CD4-positive, alpha-beta T cell (primary cell): ENCODE measurements at regions of chr17 and their contacts with region 1.

Region 1: DNA sequence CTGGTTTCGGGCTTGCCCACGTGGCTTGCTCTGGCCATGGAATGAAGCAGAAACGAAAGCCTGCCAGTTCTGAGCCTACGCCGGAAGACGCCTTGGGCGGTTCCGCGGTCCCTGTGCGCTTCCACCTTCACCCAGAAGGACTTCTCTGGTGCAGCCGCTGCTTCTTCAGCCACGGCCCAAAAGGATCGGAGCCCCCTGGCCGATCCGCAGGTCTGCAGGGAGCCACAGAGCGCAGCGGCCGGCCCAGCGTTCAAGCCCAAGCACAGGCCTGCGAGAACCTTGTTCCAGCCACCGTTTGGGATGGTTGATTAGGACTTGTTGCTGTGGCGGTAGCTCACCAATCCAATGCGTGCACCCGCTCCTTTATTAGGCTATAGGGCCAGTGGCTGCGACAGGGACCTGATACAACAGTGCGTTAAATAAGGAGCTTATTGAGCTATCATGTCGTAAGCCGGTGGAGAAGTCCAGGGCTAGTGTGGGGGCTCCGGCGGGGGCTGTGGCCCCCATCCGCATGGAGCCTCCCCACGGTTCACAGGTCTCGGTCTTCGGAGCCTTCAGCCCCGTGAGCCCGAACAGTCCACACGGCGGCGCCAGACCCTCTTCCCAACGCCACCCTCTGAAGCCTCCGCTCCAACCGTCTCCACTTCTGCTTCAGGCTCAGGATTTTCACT is 10.1 kb upstream of the MPP2 start:
- DNase-seq: peak in 12 of 14 experiments; percentile 23 to 77 (median 45)
- ATAC-seq: peak; percentile 80
- H3K4me3 ChIP-seq: peak overlapping the region; percentile 63
- H3K4me3 Mint-ChIP-seq: peak overlapping the region; percentile 86
- H3K27ac ChIP-seq: no peak overlapping the region
- H3K27ac Mint-ChIP-seq: peak overlapping the region; percentile 26
- H3K4me1 ChIP-seq: peaks cover 20% of the 10 kb centered on the region
- H3K4me1 Mint-ChIP-seq: peaks cover 18% of the 10 kb centered on the region
- H3K27me3 ChIP-seq: no peaks in the 10 kb centered on the region
- H3K27me3 Mint-ChIP-seq: no peaks in the 10 kb centered on the region
- CTCF ChIP-seq: peak; percentile 55

Region 2: GRCh38 chr17:43832976-43833829 is 84.3 kb before region 1 on chr17 and contains the start of gene MPP3:
- CTCF ChIA-PET with region 1: no interaction called
- POLR2A ChIA-PET with region 1: no interaction called
- intact Hi-C with region 1: no loop called
- DNase-seq: peak; percentile 5 to 81 (median 51)
- ATAC-seq: peak; percentile 95
- H3K4me3 ChIP-seq: peak within 1 kb of the TSS; percentile 59
- H3K4me3 Mint-ChIP-seq: peak within 1 kb of the TSS; percentile 91
- H3K27ac ChIP-seq: no peak within 1 kb of the TSS
- H3K27ac Mint-ChIP-seq: no peak within 1 kb of the TSS
- H3K4me1 ChIP-seq: peaks cover 17% of the 10 kb centered on the region
- H3K4me1 Mint-ChIP-seq: peaks cover 12% of the 10 kb centered on the region
- H3K27me3 ChIP-seq: peaks cover 15 to 18% of the 10 kb centered on the region in 2 experiments
- H3K27me3 Mint-ChIP-seq: peaks cover 55% of the 10 kb centered on the region
- CTCF ChIP-seq: no peak
- total RNA-seq, gene MPP3: 0.14 TPM in 1 of 2 experiments, not detected in the other

Region 3: DNA sequence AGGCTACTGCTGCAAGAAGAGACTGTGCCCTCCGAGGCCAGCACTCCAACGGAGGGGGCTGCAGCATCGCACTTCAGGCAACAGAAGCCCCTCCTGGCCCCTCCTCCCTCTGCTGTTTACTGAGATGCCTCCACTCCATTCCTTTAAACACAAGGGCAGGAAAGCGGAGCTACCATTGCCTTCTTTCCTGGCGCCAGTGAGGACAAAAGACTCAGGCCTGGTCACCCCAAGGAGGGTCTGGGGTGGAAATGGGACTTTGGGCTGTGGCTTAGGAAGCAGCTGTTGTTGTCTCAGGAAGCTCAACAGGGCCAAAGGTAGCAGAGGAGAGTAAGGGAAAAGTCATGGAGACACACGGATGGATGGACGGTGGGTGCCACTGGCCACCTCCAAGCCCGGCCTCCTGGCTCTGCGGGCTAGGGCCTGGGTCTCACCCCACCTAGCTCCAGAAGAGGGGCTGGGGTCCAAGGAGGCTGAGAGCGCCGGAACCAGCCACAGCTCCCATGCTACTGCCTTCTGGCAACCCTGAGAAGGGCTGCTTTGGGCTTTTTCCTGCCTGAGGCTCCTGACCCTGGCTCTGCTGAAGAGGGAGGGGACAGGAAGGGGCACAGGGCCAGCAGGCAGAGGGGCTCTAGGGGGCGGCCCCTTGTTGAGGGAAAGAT is 59.4 kb before region 1 on chr17:
- CTCF ChIA-PET with region 1: no interaction called
- POLR2A ChIA-PET with region 1: no interaction called
- intact Hi-C with region 1: no loop called
- DNase-seq: no peak
- ATAC-seq: no peak
- H3K4me3 ChIP-seq: no peak overlapping the region
- H3K4me3 Mint-ChIP-seq: no peak overlapping the region
- H3K27ac ChIP-seq: no peak overlapping the region
- H3K27ac Mint-ChIP-seq: no peak overlapping the region
- H3K4me1 ChIP-seq: no peaks in the 10 kb centered on the region
- H3K4me1 Mint-ChIP-seq: no peaks in the 10 kb centered on the region
- H3K27me3 ChIP-seq: peaks cover 0 to 18% of the 10 kb centered on the region in 2 experiments
- H3K27me3 Mint-ChIP-seq: peaks cover 8% of the 10 kb centered on the region
- CTCF ChIP-seq: no peak

Region 4: DNA sequence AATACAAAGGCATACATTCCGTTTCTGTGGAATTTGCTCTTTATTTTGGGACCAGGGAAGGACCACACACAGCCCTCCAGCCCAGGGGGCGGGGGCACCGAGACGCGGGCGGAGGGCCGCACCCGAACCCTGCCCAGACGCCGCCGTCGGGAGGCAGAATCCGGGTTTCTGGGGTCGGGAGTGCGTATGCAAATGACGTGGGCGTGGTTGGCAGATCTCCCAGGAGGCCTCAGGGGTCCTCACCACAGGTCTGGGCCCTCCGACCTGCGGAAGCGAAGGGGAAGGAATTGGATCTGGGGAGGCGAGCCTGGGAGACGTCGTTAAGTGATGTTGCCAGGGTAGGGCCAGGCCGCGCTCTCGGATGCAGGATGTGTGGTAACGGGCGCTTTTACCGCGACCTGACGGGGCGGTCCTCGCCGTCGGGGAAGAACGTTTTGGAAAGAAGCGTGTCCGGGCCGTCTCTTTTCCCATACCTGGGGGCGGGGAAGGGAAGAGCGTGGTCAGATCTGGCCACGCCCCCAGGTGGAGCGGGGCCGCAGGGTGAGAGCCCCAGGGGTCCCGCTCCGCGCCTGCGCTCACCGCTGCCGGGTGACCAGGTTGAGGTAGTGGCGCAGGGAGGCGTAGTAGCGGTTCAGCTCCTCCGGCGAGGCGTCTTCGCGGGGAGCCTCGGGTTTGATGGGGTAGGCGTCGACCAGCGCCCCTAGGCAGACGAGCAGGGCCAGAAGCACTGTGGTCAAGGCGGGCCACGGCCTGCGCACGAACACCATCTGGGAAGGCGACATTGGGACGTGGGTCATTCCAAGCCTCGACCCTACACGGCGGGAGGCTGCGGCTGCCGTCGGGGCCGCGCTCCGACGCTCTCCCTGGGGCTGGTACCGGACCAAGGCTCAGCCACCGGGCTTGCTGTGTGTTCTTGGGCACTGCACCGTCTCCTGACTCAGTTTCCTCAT is 35.5 kb after region 1 on chr17:
- CTCF ChIA-PET with region 1: no interaction called
- POLR2A ChIA-PET with region 1: no interaction called
- intact Hi-C with region 1: no loop called
- DNase-seq: no peak
- ATAC-seq: no peak
- H3K4me3 ChIP-seq: no peak overlapping the region
- H3K4me3 Mint-ChIP-seq: no peak overlapping the region
- H3K27ac ChIP-seq: no peak overlapping the region
- H3K27ac Mint-ChIP-seq: no peak overlapping the region
- H3K4me1 ChIP-seq: peaks cover 11% of the 10 kb centered on the region
- H3K4me1 Mint-ChIP-seq: no peaks in the 10 kb centered on the region
- H3K27me3 ChIP-seq: peaks cover 46% of the 10 kb centered on the region in 2 experiments
- H3K27me3 Mint-ChIP-seq: peaks cover 67% of the 10 kb centered on the region
- CTCF ChIP-seq: no peak

Region 5: DNA sequence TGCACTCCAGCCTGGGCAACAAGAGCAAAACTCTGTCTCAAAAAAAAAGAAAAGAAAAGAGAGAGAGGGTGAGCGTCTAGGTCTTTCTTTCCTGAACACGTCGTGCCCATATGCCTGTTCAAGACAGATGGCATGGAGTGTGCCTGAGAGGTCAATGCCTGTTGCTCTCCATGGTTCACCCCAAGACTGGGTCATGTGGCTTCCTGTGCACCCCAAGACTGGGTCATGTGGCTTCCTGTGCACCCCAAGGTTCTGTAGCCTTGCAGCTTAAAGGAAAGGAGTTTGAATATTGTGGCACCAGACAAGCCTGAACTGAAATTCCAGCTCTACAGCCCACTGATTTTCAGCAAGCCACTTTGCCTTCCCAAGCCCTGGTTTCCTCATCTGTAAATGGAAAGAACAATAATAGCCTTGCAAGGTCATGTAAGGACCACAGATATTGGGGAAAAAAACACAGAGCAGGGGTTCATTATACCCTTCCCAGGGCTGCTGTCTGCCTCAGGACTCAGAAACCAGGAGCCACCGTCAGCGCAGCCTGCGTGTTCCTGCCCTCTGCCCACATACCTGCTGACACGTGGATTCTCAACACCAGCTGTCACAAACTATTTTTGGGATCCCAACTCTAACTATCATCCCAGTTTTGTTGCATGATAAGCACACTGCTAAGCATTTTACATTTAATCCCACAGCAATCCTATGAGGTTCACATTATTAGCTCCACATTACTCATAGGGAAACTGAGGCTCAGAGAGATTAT is 68.9 kb after region 1 on chr17:
- CTCF ChIA-PET with region 1: no interaction called
- POLR2A ChIA-PET with region 1: no interaction called
- intact Hi-C with region 1: no loop called
- DNase-seq: no peak
- ATAC-seq: no peak
- H3K4me3 ChIP-seq: no peak overlapping the region
- H3K4me3 Mint-ChIP-seq: no peak overlapping the region
- H3K27ac ChIP-seq: no peak overlapping the region
- H3K27ac Mint-ChIP-seq: no peak overlapping the region
- H3K4me1 ChIP-seq: peaks cover 15% of the 10 kb centered on the region
- H3K4me1 Mint-ChIP-seq: no peaks in the 10 kb centered on the region
- H3K27me3 ChIP-seq: peaks cover 35 to 55% of the 10 kb centered on the region in 2 experiments
- H3K27me3 Mint-ChIP-seq: peaks cover 68% of the 10 kb centered on the region
- CTCF ChIP-seq: no peak

Region 6: GRCh38 chr17:44044067-44044466 is 126.6 kb after region 1 on chr17:
- CTCF ChIA-PET with region 1: no interaction called
- POLR2A ChIA-PET with region 1: no interaction called
- intact Hi-C with region 1: loop called in 1 of 2 experiments (anchors 10 kb)
- DNase-seq: no peak
- ATAC-seq: no peak
- H3K4me3 ChIP-seq: no peak overlapping the region
- H3K4me3 Mint-ChIP-seq: no peak overlapping the region
- H3K27ac ChIP-seq: no peak overlapping the region
- H3K27ac Mint-ChIP-seq: no peak overlapping the region
- H3K4me1 ChIP-seq: peaks cover 6% of the 10 kb centered on the region
- H3K4me1 Mint-ChIP-seq: peaks cover 13% of the 10 kb centered on the region
- H3K27me3 ChIP-seq: no peaks in the 10 kb centered on the region
- H3K27me3 Mint-ChIP-seq: no peaks in the 10 kb centered on the region
- CTCF ChIP-seq: no peak